ENCODE measurements at regions of chr6 and their contacts with region 1.

Region 1: GRCh38 chr6:160348142-160349019 is at the start of gene SLC22A3:
- DNase-seq: peak; percentile 52 to 70
- H3K4me3 ChIP-seq: peak within 1 kb of the TSS; percentile 57
- H3K4me3 Mint-ChIP-seq: peak within 1 kb of the TSS; percentile 88
- H3K27ac Mint-ChIP-seq: no peak within 1 kb of the TSS
- H3K4me1 ChIP-seq: peaks cover 4% of the 10 kb centered on the region; the same call in 1 of the 2 replicates
- H3K4me1 Mint-ChIP-seq: peaks cover 14% of the 10 kb centered on the region
- H3K27me3 ChIP-seq: no peaks in the 10 kb centered on the region
- H3K27me3 Mint-ChIP-seq: peaks cover 10% of the 10 kb centered on the region
- CTCF ChIP-seq: peak; percentile 18 to 43
- total RNA-seq, gene SLC22A3: 2.3 and 2.4 TPM in 2 replicates

Region 2: DNA sequence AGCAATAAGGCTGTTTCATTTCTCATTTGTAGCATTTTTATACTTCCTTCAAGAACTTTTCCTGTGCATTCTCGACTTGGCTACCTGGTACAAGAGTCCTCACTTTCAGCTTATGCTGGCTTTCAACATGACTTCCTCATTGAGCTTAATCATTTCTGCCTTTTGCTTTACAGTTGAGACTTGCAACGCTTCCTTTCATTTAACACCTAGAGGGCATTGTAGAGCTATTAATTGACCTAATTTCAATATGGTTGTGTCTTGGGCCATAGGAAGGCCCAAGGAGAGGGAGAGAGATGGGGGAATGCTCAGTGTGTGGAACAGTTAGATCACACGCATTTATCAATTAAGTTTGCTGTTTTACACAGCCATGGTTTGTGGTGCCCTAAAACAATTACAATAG is 127.0 kb before region 1 on chr6:
- CTCF ChIA-PET with region 1: no interaction called
- POLR2A ChIA-PET with region 1: no interaction called
- intact Hi-C with region 1: loop called (anchors 2 kb)
- DNase-seq: peak in 1 of 2 experiments; percentile 15
- H3K4me3 ChIP-seq: no peak overlapping the region
- H3K4me3 Mint-ChIP-seq: no peak overlapping the region
- H3K27ac Mint-ChIP-seq: no peak overlapping the region
- H3K4me1 ChIP-seq: no peaks in the 10 kb centered on the region
- H3K4me1 Mint-ChIP-seq: peaks cover 11% of the 10 kb centered on the region
- H3K27me3 ChIP-seq: no peaks in the 10 kb centered on the region
- H3K27me3 Mint-ChIP-seq: no peaks in the 10 kb centered on the region
- CTCF ChIP-seq: peak in 1 of 2 experiments; percentile 12

Region 3: GRCh38 chr6:160391416-160392116 is 43.2 kb after region 1 on chr6:
- CTCF ChIA-PET with region 1: no interaction called
- POLR2A ChIA-PET with region 1: no interaction called
- intact Hi-C with region 1: loop called (anchors 5 kb)
- DNase-seq: peak; percentile 51 to 63
- H3K4me3 ChIP-seq: no peak overlapping the region
- H3K4me3 Mint-ChIP-seq: no peak overlapping the region
- H3K27ac Mint-ChIP-seq: peak overlapping the region; percentile 19
- H3K4me1 ChIP-seq: peaks cover 35% of the 10 kb centered on the region
- H3K4me1 Mint-ChIP-seq: peaks cover 19% of the 10 kb centered on the region
- H3K27me3 ChIP-seq: no peaks in the 10 kb centered on the region
- H3K27me3 Mint-ChIP-seq: no peaks in the 10 kb centered on the region
- CTCF ChIP-seq: no peak